Right ventricle myocardium superior (tissue), 1 donor: ENCODE measurements at regions of chr10 and their contacts with region 1.

Region 1: GRCh38 chr10:114623661-114624294 is 34.3 kb downstream of the ABLIM1 start:
- DNase-seq: no peak
- ATAC-seq: peak; percentile 7

Region 2: GRCh38 chr10:114499630-114500190 is 124.1 kb before region 1 on chr10:
- intact Hi-C with region 1: no loop called
- DNase-seq: no peak
- ATAC-seq: peak; percentile 4

Region 3: GRCh38 chr10:114779803-114780609 is 156.2 kb after region 1 on chr10:
- intact Hi-C with region 1: loop called (anchors 10 kb)
- DNase-seq: no peak
- ATAC-seq: no peak

Region 4: GRCh38 chr10:114920470-114920869 is 296.7 kb after region 1 on chr10:
- intact Hi-C with region 1: no loop called
- DNase-seq: no peak
- ATAC-seq: no peak

Region 5: DNA sequence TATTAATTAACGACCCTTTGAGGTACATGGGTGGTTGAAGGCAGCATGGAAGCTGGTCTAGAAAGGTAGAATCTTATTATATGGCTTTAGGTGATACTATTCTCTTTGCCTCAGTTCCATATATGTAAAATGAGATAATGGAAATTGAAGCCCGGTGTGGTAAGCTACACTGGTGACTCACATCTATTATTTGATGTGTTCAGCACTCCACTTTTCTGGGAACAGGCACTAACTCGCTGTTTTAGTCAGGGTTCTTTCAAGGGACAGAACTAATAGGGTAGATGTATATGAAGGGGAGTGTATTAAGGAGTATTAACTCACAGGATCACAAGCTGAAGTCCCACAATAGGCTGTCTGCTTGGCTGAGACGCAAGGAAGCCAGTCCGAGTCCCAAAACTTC is 309.8 kb after region 1 on chr10:
- intact Hi-C with region 1: no loop called
- DNase-seq: no peak
- ATAC-seq: no peak